Naive thymus-derived CD4-positive, alpha-beta T cell (primary cell): ENCODE measurements at regions of chr2 and their contacts with region 1.

Region 1: GRCh38 chr2:208265801-208266552 is at the start of gene PIKFYVE:
- DNase-seq: peak; percentile 63 to 87 (median 83)
- ATAC-seq: peak; percentile 94
- H3K4me3 ChIP-seq: peak within 1 kb of the TSS; percentile 97
- H3K4me3 Mint-ChIP-seq: peak within 1 kb of the TSS; percentile 90 to 99 (median 96)
- H3K27ac ChIP-seq: peak within 1 kb of the TSS; percentile 83
- H3K27ac Mint-ChIP-seq: peak within 1 kb of the TSS; percentile 87 to 98 (median 95)
- H3K4me1 ChIP-seq: peaks cover 12 to 16% of the 10 kb centered on the region in 2 donors
- H3K4me1 Mint-ChIP-seq: peaks cover 9 to 60% (median 53%) of the 10 kb centered on the region in 7 donors
- H3K27me3 ChIP-seq: no peaks in the 10 kb centered on the region
- H3K27me3 Mint-ChIP-seq: peaks cover 0 to 5% (median 0%) of the 10 kb centered on the region in 5 donors
- total RNA-seq, gene PIKFYVE: 33.4 to 52.3 (median 39.1) TPM

Region 2: GRCh38 chr2:207710814-207711740 is 554.9 kb before region 1 on chr2 and contains the start of gene CCNYL1:
- CTCF ChIA-PET with region 1: no interaction called
- POLR2A ChIA-PET with region 1: no interaction called
- intact Hi-C with region 1: loop called (anchors 5 kb)
- DNase-seq: peak; percentile 93 to 98 (median 97)
- ATAC-seq: peak; percentile 98
- H3K4me3 ChIP-seq: peak within 1 kb of the TSS; percentile 88
- H3K4me3 Mint-ChIP-seq: peak within 1 kb of the TSS; percentile 94 to 99 (median 97)
- H3K27ac ChIP-seq: peak within 1 kb of the TSS; percentile 83
- H3K27ac Mint-ChIP-seq: peak within 1 kb of the TSS; percentile 83 to 98 (median 93)
- H3K4me1 ChIP-seq: peaks cover 4 to 11% of the 10 kb centered on the region in 2 donors
- H3K4me1 Mint-ChIP-seq: peaks cover 15 to 32% (median 27%) of the 10 kb centered on the region in 7 donors
- H3K27me3 ChIP-seq: no peaks in the 10 kb centered on the region
- H3K27me3 Mint-ChIP-seq: peaks cover 0 to 3% (median 0%) of the 10 kb centered on the region in 5 donors
- total RNA-seq, gene CCNYL1: 6.7 to 16.7 (median 10.7) TPM

Region 3: GRCh38 chr2:208025037-208025813 is 240.8 kb before region 1 on chr2 and contains the start of gene PLEKHM3:
- CTCF ChIA-PET with region 1: no interaction called
- POLR2A ChIA-PET with region 1: no interaction called
- intact Hi-C with region 1: loop called in 1 of 2 experiments (anchors 1 kb)
- DNase-seq: peak; percentile 12 to 80 (median 62)
- ATAC-seq: peak; percentile 93
- H3K4me3 ChIP-seq: peak within 1 kb of the TSS; percentile 88
- H3K4me3 Mint-ChIP-seq: peak within 1 kb of the TSS; percentile 85 to 100 (median 96)
- H3K27ac ChIP-seq: peak within 1 kb of the TSS; percentile 76
- H3K27ac Mint-ChIP-seq: peak within 1 kb of the TSS; percentile 89 to 98 (median 94)
- H3K4me1 ChIP-seq: peaks cover 0 to 4% of the 10 kb centered on the region in 2 donors
- H3K4me1 Mint-ChIP-seq: peaks cover 12 to 34% (median 27%) of the 10 kb centered on the region in 7 donors
- H3K27me3 ChIP-seq: no peaks in the 10 kb centered on the region
- H3K27me3 Mint-ChIP-seq: no peaks in the 10 kb centered on the region
- total RNA-seq, gene PLEKHM3: 6.1 to 19.4 (median 15.5) TPM

Region 4: DNA sequence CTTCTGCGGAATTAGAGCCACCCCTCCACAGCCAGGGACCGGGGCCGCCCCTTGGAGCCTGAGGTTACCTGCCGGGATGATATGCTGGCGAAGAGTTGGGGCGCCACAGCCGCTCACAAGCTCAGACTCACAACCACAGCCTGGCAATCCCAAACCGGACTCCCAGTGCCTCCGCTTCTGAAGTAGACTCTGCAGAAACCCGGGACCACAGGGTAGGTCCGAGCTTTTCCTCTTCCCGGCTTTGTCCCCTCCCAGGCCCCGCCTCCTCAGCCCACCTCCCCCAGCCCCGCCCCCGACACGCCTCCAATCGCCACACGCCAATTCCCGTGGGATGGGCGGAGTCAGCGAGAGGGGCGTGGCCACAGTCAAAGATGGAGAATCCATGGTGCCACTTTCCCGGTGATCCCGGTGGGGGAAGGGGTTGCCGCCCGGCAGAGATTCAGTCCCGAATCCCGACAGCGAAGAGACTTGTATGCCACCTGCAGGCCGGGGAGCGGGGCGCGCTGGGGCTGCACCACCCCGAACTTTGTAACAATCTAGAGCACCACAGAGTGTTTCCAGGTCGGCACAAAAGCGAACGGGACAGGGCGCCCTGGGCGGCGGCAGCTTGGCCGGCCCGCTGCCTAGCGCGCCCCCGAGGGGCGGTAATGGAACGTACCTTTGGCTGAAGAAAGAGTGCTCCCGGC is 11.0 kb before region 1 on chr2 and contains the start of gene IDH1:
- CTCF ChIA-PET with region 1: interaction called, 12 read pairs
- POLR2A ChIA-PET with region 1: interaction called, 32 read pairs
- intact Hi-C with region 1: loop called (anchors 1 kb)
- DNase-seq: peak; percentile 79 to 97 (median 88)
- ATAC-seq: peak; percentile 95
- H3K4me3 ChIP-seq: peak within 1 kb of the TSS; percentile 70
- H3K4me3 Mint-ChIP-seq: peak within 1 kb of the TSS; percentile 93 to 100 (median 97)
- H3K27ac ChIP-seq: peak within 1 kb of the TSS; percentile 62
- H3K27ac Mint-ChIP-seq: peak within 1 kb of the TSS; percentile 47 to 91 (median 79)
- H3K4me1 ChIP-seq: peaks cover 0 to 9% of the 10 kb centered on the region in 2 donors
- H3K4me1 Mint-ChIP-seq: peaks cover 8 to 28% (median 23%) of the 10 kb centered on the region in 7 donors
- H3K27me3 ChIP-seq: no peaks in the 10 kb centered on the region
- H3K27me3 Mint-ChIP-seq: peaks cover 0 to 3% (median 0%) of the 10 kb centered on the region in 5 donors
- total RNA-seq, gene IDH1: 5.0 to 26.4 (median 20.4) TPM

Region 5: GRCh38 chr2:208595386-208596275 is 329.7 kb after region 1 on chr2:
- CTCF ChIA-PET with region 1: no interaction called
- POLR2A ChIA-PET with region 1: no interaction called
- intact Hi-C with region 1: no loop called
- DNase-seq: no peak
- ATAC-seq: no peak
- H3K4me3 ChIP-seq: no peak overlapping the region
- H3K4me3 Mint-ChIP-seq: no peak overlapping the region
- H3K27ac ChIP-seq: no peak overlapping the region
- H3K27ac Mint-ChIP-seq: no peak overlapping the region
- H3K4me1 ChIP-seq: no peaks in the 10 kb centered on the region
- H3K4me1 Mint-ChIP-seq: no peaks in the 10 kb centered on the region
- H3K27me3 ChIP-seq: no peaks in the 10 kb centered on the region
- H3K27me3 Mint-ChIP-seq: no peaks in the 10 kb centered on the region

Region 6: DNA sequence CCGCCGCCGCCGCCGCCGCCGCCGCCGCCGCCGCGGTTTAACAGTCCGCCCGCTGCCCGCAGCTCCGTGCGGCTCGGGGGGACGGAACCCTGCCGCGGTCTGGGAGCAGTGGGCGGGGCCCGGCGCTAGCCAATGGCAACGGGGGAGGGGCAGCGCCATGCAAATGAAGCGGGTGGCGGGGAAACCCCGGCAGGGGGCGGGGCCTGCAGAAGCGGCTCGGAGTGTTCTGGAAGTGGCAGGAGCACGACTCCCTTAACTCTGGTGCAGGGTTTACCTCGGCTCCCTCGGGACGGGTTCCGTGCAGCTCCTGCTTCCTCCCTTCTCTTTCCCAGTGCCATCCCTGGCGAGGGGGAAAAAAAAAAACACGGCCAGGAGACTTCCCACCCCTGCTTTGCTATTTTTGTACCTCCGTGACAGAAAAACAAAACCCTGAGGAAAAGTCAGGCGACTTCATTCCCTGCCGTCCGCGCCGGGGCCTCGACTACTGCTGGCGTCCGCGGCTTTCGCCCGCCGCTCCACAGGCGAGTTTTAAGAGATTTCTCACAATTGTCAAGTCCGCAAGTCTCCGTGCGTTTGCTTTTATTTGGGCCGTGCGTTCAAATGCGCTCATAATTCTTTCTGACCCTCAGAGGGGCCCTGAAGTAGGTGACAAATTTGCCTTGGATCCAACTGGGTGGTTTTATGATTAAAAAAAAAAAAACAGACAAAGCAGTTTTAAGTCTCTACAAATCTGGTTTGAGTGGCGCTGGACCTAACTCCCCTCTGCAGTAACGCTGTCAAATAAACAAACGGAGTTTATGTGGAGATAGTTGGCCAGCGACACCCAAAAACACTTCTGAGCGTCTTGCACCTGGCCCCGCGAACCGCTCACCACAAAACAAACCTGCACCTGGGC is 1905.6 kb after region 1 on chr2 and contains the start of gene KANSL1L:
- CTCF ChIA-PET with region 1: no interaction called
- POLR2A ChIA-PET with region 1: no interaction called
- intact Hi-C with region 1: loop called (anchors 2 to 5 kb)
- DNase-seq: peak; percentile 92 to 99 (median 94)
- ATAC-seq: peak; percentile 95
- H3K4me3 ChIP-seq: peak within 1 kb of the TSS; percentile 89
- H3K4me3 Mint-ChIP-seq: peak within 1 kb of the TSS; percentile 90 to 100 (median 98)
- H3K27ac ChIP-seq: peak within 1 kb of the TSS; percentile 93
- H3K27ac Mint-ChIP-seq: peak within 1 kb of the TSS; percentile 93 to 99 (median 96)
- H3K4me1 ChIP-seq: peaks cover 6 to 7% of the 10 kb centered on the region in 2 donors
- H3K4me1 Mint-ChIP-seq: peaks cover 17 to 42% (median 33%) of the 10 kb centered on the region in 7 donors
- H3K27me3 ChIP-seq: no peaks in the 10 kb centered on the region
- H3K27me3 Mint-ChIP-seq: peaks cover 0 to 41% (median 0%) of the 10 kb centered on the region in 5 donors
- total RNA-seq, gene KANSL1L: 6.3 to 23.3 (median 13.3) TPM